ENCODE measurements at regions of chr7 and their contacts with region 1.

Region 1: DNA sequence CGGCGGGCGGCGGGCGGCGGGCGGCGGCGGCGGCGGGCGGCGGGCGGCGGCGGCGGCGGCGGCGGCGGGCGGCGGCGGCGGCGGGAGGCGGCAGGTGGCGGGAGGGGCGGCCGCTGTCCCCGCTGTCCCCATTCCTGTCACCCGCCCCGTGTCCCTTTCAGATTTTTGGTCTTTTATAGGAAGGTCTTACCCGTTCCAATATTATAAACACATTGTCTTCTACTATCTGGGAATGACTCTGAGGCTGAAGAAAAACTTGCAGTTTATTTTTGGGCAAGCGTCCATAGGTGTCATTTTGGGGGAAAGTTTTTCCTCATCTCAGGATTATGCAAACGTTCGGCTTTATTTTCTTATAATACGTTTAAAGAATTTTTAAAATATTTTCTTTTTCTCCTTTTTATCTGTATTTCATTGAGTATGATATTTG is 578 bp downstream of the ZNF713 start:
- DNase-seq: no peak
- ATAC-seq: no peak
- H3K4me3 Mint-ChIP-seq: peak overlapping the region; percentile 78
- H3K27ac Mint-ChIP-seq: peak overlapping the region; percentile 60
- H3K4me1 Mint-ChIP-seq: peaks cover 4% of the 10 kb centered on the region
- H3K27me3 Mint-ChIP-seq: no peaks in the 10 kb centered on the region
- CTCF ChIP-seq: no peak

Region 2: GRCh38 chr7:54758702-54759592 is 1128.9 kb before region 1 on chr7 and contains the start of gene SEC61G:
- CTCF ChIA-PET with region 1: no interaction called
- POLR2A ChIA-PET with region 1: no interaction called
- intact Hi-C with region 1: loop called (anchors 1 kb)
- DNase-seq: peak; percentile 89
- ATAC-seq: peak; percentile 95
- H3K4me3 Mint-ChIP-seq: peak within 1 kb of the TSS; percentile 98
- H3K27ac Mint-ChIP-seq: peak within 1 kb of the TSS; percentile 92
- H3K4me1 Mint-ChIP-seq: peaks cover 21% of the 10 kb centered on the region
- H3K27me3 Mint-ChIP-seq: no peaks in the 10 kb centered on the region
- CTCF ChIP-seq: no peak
- total RNA-seq, gene SEC61G: 57.3 and 65.8 TPM in 2 replicates

Region 3: DNA sequence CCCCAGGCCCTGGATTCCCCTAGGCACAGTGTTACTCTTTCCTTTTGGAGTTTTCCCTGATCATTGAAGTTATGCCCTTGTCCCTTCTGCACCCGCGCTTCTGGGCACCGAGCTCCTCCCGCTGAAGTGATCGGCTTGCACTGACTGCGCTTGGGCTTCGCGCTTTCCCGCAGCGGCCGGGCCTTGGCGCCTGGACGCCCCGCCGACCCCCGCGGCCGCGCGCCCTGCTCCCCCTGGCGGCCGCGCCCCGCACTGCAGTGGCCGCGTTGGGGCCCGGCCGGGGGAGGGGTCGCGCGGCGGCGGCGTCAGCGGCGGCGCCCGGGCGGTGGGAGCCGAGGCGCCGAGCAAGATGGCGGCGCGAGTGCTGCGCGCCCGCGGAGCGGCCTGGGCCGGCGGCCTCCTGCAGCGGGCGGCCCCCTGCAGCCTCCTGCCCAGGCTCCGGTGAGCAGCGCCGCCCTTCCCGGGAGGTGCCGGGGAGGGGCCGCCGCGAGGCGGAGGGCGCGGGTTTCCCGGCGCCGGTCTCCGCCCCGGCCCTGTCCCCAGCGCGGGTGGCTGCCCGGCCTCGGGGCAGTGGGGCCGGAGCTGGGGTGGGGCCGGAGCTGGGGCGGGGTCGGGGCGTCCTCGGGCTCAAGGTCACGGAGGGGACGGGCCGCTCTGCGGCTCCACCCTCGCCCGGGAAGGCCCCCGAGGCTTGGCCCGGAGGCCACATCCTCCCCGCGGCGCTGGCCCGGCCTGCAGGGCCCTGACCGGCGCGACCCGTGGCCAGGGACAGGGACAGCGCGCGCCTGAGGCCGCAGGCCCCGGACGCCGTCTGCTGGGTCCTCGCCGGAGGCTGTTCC is 76.6 kb after region 1 on chr7 and contains the start of gene NIPSNAP2:
- CTCF ChIA-PET with region 1: no interaction called
- POLR2A ChIA-PET with region 1: no interaction called
- intact Hi-C with region 1: loop called (anchors 5 kb)
- DNase-seq: peak; percentile 79
- ATAC-seq: peak; percentile 88
- H3K4me3 Mint-ChIP-seq: peak within 1 kb of the TSS; percentile 86
- H3K27ac Mint-ChIP-seq: peak within 1 kb of the TSS; percentile 88
- H3K4me1 Mint-ChIP-seq: peaks cover 25% of the 10 kb centered on the region
- H3K27me3 Mint-ChIP-seq: no peaks in the 10 kb centered on the region
- CTCF ChIP-seq: no peak
- total RNA-seq, gene NIPSNAP2: 33.7 and 43.8 TPM in 2 replicates

Region 4: GRCh38 chr7:56063882-56064625 is 176.2 kb after region 1 on chr7 and contains the start of gene SUMF2:
- CTCF ChIA-PET with region 1: no interaction called
- POLR2A ChIA-PET with region 1: no interaction called
- intact Hi-C with region 1: loop called (anchors 1 kb)
- DNase-seq: peak; percentile 91
- ATAC-seq: peak; percentile 92
- H3K4me3 Mint-ChIP-seq: peak within 1 kb of the TSS; percentile 92
- H3K27ac Mint-ChIP-seq: peak within 1 kb of the TSS; percentile 85
- H3K4me1 Mint-ChIP-seq: peaks cover 32% of the 10 kb centered on the region
- H3K27me3 Mint-ChIP-seq: no peaks in the 10 kb centered on the region
- CTCF ChIP-seq: no peak
- total RNA-seq, gene SUMF2: 91.1 and 103 TPM in 2 replicates